Endothelial cell of umbilical vein (primary cell): ENCODE measurements at regions of chr11 and their contacts with region 1.

Region 1: GRCh38 chr11:131748151-131749050 is 378.0 kb downstream of the NTM start:
- DNase-seq: peak; percentile 85
- H3K4me3 ChIP-seq: no peak overlapping the region
- H3K27ac ChIP-seq: peak overlapping the region; percentile 92
- H3K4me1 ChIP-seq: peaks cover 56% of the 10 kb centered on the region
- H3K27me3 ChIP-seq: no peaks in the 10 kb centered on the region
- CTCF ChIP-seq: peak; percentile 83 to 84
- POLR2A ChIP-seq: no peak

Region 2: GRCh38 chr11:131694526-131695424 is 53.6 kb before region 1 on chr11:
- CTCF ChIA-PET with region 1: interaction called, 135 read pairs
- POLR2A ChIA-PET with region 1: no interaction called
- dilution Hi-C with region 1: no loop called
- intact Hi-C with region 1: loop called (anchors 1 kb)
- DNase-seq: peak; percentile 75
- H3K4me3 ChIP-seq: no peak overlapping the region
- H3K27ac ChIP-seq: no peak overlapping the region
- H3K4me1 ChIP-seq: no peaks in the 10 kb centered on the region
- H3K27me3 ChIP-seq: peaks cover 0 to 2% of the 10 kb centered on the region in 2 experiments
- CTCF ChIP-seq: peak; percentile 92 to 97
- POLR2A ChIP-seq: no peak

Region 3: GRCh38 chr11:131760091-131761061 is 12.0 kb after region 1 on chr11:
- CTCF ChIA-PET with region 1: interaction called, 21 read pairs
- POLR2A ChIA-PET with region 1: no interaction called
- dilution Hi-C with region 1: no loop called
- intact Hi-C with region 1: no loop called
- DNase-seq: no peak
- H3K4me3 ChIP-seq: no peak overlapping the region
- H3K27ac ChIP-seq: peak overlapping the region; percentile 23
- H3K4me1 ChIP-seq: peaks cover 13% of the 10 kb centered on the region
- H3K27me3 ChIP-seq: no peaks in the 10 kb centered on the region
- CTCF ChIP-seq: no peak
- POLR2A ChIP-seq: no peak

Region 4: GRCh38 chr11:131859538-131860210 is 111.3 kb after region 1 on chr11:
- CTCF ChIA-PET with region 1: interaction called, 267 read pairs
- POLR2A ChIA-PET with region 1: interaction called, 4 read pairs
- dilution Hi-C with region 1: no loop called
- intact Hi-C with region 1: loop called (anchors 1 kb)
- DNase-seq: peak; percentile 90
- H3K4me3 ChIP-seq: no peak overlapping the region
- H3K27ac ChIP-seq: peak overlapping the region; percentile 93
- H3K4me1 ChIP-seq: peaks cover 54% of the 10 kb centered on the region
- H3K27me3 ChIP-seq: no peaks in the 10 kb centered on the region
- CTCF ChIP-seq: no peak
- POLR2A ChIP-seq: no peak

Region 5: GRCh38 chr11:131910523-131911387 is 162.4 kb after region 1 on chr11:
- CTCF ChIA-PET with region 1: interaction called, 163 read pairs
- POLR2A ChIA-PET with region 1: no interaction called
- dilution Hi-C with region 1: loop called (anchors 25 kb)
- intact Hi-C with region 1: loop called (anchors 1 kb)
- DNase-seq: peak; percentile 43
- H3K4me3 ChIP-seq: peak overlapping the region; percentile 49 to 76 (median 64)
- H3K27ac ChIP-seq: peak overlapping the region; percentile 19
- H3K4me1 ChIP-seq: peaks cover 5% of the 10 kb centered on the region
- H3K27me3 ChIP-seq: peaks cover 0 to 10% of the 10 kb centered on the region in 2 experiments
- CTCF ChIP-seq: no peak
- POLR2A ChIP-seq: no peak

Region 6: GRCh38 chr11:131977231-131977630 is 228.8 kb after region 1 on chr11:
- CTCF ChIA-PET with region 1: no interaction called
- POLR2A ChIA-PET with region 1: no interaction called
- dilution Hi-C with region 1: no loop called
- intact Hi-C with region 1: no loop called
- DNase-seq: no peak
- H3K4me3 ChIP-seq: no peak overlapping the region
- H3K27ac ChIP-seq: no peak overlapping the region
- H3K4me1 ChIP-seq: peaks cover 3% of the 10 kb centered on the region
- H3K27me3 ChIP-seq: no peaks in the 10 kb centered on the region
- CTCF ChIP-seq: no peak
- POLR2A ChIP-seq: no peak

Region 7: DNA sequence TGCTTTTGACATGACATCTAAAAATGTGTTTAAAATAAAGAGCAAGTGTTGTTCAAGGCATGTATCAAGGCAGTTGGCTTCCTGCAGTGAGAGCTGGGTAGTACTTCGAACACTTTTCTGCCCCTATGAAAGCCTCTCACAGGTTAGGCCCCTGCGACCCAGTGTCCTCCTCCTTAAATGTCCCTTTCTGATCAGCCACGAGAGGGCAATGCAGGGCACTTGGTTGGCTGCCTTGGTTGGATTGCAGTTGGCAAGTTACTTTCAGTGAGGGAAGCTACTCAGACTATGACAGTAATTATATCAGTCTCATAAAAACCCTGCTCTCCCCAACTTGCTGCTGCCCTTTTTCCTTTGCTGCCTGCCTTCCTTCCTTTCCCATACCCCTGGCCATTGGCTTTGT is 365.8 kb after region 1 on chr11:
- CTCF ChIA-PET with region 1: interaction called, 4 read pairs
- POLR2A ChIA-PET with region 1: no interaction called
- dilution Hi-C with region 1: no loop called
- intact Hi-C with region 1: loop called (anchors 5 kb)
- DNase-seq: peak; percentile 44
- H3K4me3 ChIP-seq: no peak overlapping the region
- H3K27ac ChIP-seq: no peak overlapping the region
- H3K4me1 ChIP-seq: peaks cover 9% of the 10 kb centered on the region
- H3K27me3 ChIP-seq: no peaks in the 10 kb centered on the region
- CTCF ChIP-seq: peak in 1 of 2 donors; percentile 53
- POLR2A ChIP-seq: no peak

Region 8: DNA sequence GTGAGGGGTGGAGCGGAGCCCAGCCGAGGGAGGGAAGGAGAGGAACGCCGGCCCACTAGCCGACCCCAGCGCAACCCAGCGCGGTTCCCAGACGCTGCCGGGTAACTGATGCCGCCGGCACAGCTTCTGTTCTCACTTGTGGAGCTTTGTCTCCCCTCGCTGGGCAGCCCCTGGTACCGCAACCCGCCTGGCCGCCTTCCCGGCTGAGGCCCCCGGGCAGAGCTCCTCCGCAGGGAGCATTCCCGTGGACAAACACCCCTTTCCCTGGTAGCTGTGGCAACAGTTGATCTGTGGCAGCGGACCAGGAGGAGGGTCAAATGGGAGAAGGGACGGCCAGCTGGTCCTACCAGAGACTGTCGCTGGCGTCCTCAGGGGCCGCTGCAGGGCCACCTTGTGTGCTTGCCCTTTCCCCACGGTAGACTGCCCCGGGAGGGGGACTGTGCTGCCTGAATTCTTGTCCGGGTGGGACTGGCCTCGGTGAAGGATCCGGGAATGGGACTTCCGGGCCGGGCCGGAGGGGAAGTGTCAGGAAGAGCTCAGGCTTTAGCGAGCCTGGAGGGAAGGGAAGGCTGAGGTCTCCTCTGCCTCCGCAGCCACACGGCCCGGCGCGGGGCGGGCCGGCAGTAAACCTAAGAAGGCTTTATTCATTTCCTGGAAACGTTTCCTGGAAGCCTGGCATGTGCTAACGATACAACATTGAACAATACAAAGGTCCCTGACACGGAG is 1315.9 kb after region 1 on chr11:
- CTCF ChIA-PET with region 1: interaction called, 5 read pairs
- POLR2A ChIA-PET with region 1: no interaction called
- dilution Hi-C with region 1: no loop called
- intact Hi-C with region 1: loop called (anchors 2 kb)
- DNase-seq: peak; percentile 48
- H3K4me3 ChIP-seq: peak overlapping the region; percentile 14 to 64 (median 42)
- H3K27ac ChIP-seq: peak overlapping the region; percentile 12
- H3K4me1 ChIP-seq: peaks cover 8% of the 10 kb centered on the region
- H3K27me3 ChIP-seq: no peaks in the 10 kb centered on the region
- CTCF ChIP-seq: peak; percentile 63 to 68
- POLR2A ChIP-seq: no peak